Naive thymus-derived CD4-positive, alpha-beta T cell (primary cell): ENCODE measurements at regions of chr1 and their contacts with region 1.

Region 1: GRCh38 chr1:35769759-35770446 is at the start of gene CLSPN:
- DNase-seq: peak; percentile 75 to 95 (median 88)
- ATAC-seq: peak; percentile 97
- H3K4me3 ChIP-seq: peak within 1 kb of the TSS; percentile 87
- H3K4me3 Mint-ChIP-seq: peak within 1 kb of the TSS; percentile 97 to 100 (median 99)
- H3K27ac ChIP-seq: peak within 1 kb of the TSS; percentile 88
- H3K27ac Mint-ChIP-seq: peak within 1 kb of the TSS; percentile 73 to 96 (median 94)
- H3K4me1 ChIP-seq: no peaks in the 10 kb centered on the region
- H3K4me1 Mint-ChIP-seq: peaks cover 0 to 29% (median 11%) of the 10 kb centered on the region in 7 donors
- H3K27me3 ChIP-seq: no peaks in the 10 kb centered on the region
- H3K27me3 Mint-ChIP-seq: no peaks in the 10 kb centered on the region
- total RNA-seq, gene CLSPN: 0.11 to 48.7 (median 0.64) TPM

Region 2: GRCh38 chr1:35202048-35202719 is 567.7 kb before region 1 on chr1:
- CTCF ChIA-PET with region 1: no interaction called
- POLR2A ChIA-PET with region 1: no interaction called
- intact Hi-C with region 1: loop called (anchors 1 to 2 kb)
- DNase-seq: peak; percentile 23 to 80 (median 72)
- ATAC-seq: peak; percentile 100
- H3K4me3 ChIP-seq: no peak overlapping the region
- H3K4me3 Mint-ChIP-seq: peak overlapping the region in 1 of 10 donors; percentile 25
- H3K27ac ChIP-seq: no peak overlapping the region
- H3K27ac Mint-ChIP-seq: peak overlapping the region in 3 of 9 donors; percentile 46 to 79 (median 51)
- H3K4me1 ChIP-seq: peaks cover 0 to 8% of the 10 kb centered on the region in 2 donors
- H3K4me1 Mint-ChIP-seq: peaks cover 3 to 13% (median 9%) of the 10 kb centered on the region in 7 donors
- H3K27me3 ChIP-seq: peaks cover 0 to 4% of the 10 kb centered on the region in 2 donors
- H3K27me3 Mint-ChIP-seq: peaks cover 0 to 32% (median 0%) of the 10 kb centered on the region in 5 donors

Region 3: GRCh38 chr1:35505908-35506798 is 263.8 kb before region 1 on chr1:
- CTCF ChIA-PET with region 1: no interaction called
- POLR2A ChIA-PET with region 1: no interaction called
- intact Hi-C with region 1: loop called in 1 of 2 experiments (anchors 1 kb)
- DNase-seq: peak in 8 of 9 donors; percentile 29 to 73 (median 56)
- ATAC-seq: peak; percentile 84
- H3K4me3 ChIP-seq: peak overlapping the region; percentile 16
- H3K4me3 Mint-ChIP-seq: peak overlapping the region; percentile 75 to 84 (median 78)
- H3K27ac ChIP-seq: peak overlapping the region; percentile 60
- H3K27ac Mint-ChIP-seq: peak overlapping the region; percentile 73 to 97 (median 93)
- H3K4me1 ChIP-seq: peaks cover 32 to 45% of the 10 kb centered on the region in 2 donors
- H3K4me1 Mint-ChIP-seq: peaks cover 44 to 85% (median 82%) of the 10 kb centered on the region in 7 donors
- H3K27me3 ChIP-seq: no peaks in the 10 kb centered on the region
- H3K27me3 Mint-ChIP-seq: no peaks in the 10 kb centered on the region

Region 4: GRCh38 chr1:35641233-35641866 is 128.6 kb before region 1 on chr1 and contains the start of gene PSMB2:
- CTCF ChIA-PET with region 1: no interaction called
- POLR2A ChIA-PET with region 1: interaction called, 3 read pairs
- intact Hi-C with region 1: loop called (anchors 1 kb)
- DNase-seq: peak; percentile 89 to 96 (median 95)
- ATAC-seq: peak; percentile 97
- H3K4me3 ChIP-seq: peak within 1 kb of the TSS; percentile 89
- H3K4me3 Mint-ChIP-seq: peak within 1 kb of the TSS; percentile 97 to 100 (median 100)
- H3K27ac ChIP-seq: peak within 1 kb of the TSS; percentile 92
- H3K27ac Mint-ChIP-seq: peak within 1 kb of the TSS; percentile 98 to 100 (median 99)
- H3K4me1 ChIP-seq: peaks cover 18 to 19% of the 10 kb centered on the region in 2 donors
- H3K4me1 Mint-ChIP-seq: peaks cover 16 to 54% (median 42%) of the 10 kb centered on the region in 7 donors
- H3K27me3 ChIP-seq: no peaks in the 10 kb centered on the region
- H3K27me3 Mint-ChIP-seq: peaks cover 12 to 44% (median 30%) of the 10 kb centered on the region in 5 donors
- total RNA-seq, gene PSMB2: 20.4 to 93.5 (median 23.5) TPM

Region 5: DNA sequence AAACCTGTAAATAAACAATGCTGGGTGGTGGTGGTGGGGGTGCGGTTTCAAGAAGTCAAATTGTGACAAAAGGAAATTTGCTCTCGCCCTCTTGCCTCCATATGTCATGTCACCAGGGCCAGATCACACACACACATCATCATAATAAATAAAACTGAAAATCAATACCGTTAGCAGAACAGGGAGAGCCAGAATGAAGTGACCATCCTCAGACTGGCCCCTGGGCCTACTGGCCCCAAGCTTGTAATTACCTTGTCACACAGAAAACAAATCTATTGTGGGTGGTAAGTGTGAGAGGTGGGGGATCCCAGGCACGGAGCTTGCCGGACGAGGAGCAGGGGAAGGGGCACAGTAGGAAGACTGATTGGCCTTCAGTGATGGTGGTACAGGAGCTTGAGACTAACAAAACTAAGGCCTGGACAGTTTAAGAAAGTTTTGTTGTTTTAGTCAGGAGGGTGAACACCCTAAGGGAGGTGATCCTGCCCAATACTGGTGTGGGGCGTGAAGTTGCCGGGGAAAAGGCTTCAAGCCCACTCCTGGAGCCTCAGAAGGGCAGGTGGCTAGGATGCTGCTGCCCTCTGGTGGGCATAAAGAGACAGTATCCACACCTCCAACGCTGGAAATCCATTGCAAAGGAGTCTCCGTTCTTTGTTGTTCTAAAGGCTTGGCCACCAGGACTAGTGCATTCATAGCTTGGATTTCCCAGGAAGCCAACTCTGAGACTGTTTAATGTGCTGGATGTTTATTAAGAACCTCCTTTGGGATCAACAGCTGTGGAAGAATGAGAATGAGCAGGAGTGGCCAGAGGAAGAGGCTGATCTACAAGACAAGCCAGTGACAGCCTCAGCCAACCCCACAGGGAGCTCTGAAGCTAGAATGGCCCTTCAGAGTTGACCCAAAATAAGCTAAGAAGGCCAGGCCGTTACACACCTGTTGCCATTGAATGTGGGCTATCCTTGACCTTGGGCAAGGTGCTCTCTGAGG is 43.2 kb before region 1 on chr1:
- CTCF ChIA-PET with region 1: interaction called, 17 read pairs
- POLR2A ChIA-PET with region 1: no interaction called
- intact Hi-C with region 1: loop called (anchors 1 to 2 kb)
- DNase-seq: peak in 8 of 9 donors; percentile 16 to 59 (median 45)
- ATAC-seq: peak; percentile 90
- H3K4me3 ChIP-seq: no peak overlapping the region
- H3K4me3 Mint-ChIP-seq: no peak overlapping the region
- H3K27ac ChIP-seq: no peak overlapping the region
- H3K27ac Mint-ChIP-seq: no peak overlapping the region
- H3K4me1 ChIP-seq: no peaks in the 10 kb centered on the region
- H3K4me1 Mint-ChIP-seq: peaks cover 0 to 5% (median 0%) of the 10 kb centered on the region in 7 donors
- H3K27me3 ChIP-seq: no peaks in the 10 kb centered on the region
- H3K27me3 Mint-ChIP-seq: no peaks in the 10 kb centered on the region

Region 6: GRCh38 chr1:35882945-35883634 is 113.2 kb after region 1 on chr1 and contains the start of gene AGO1:
- CTCF ChIA-PET with region 1: no interaction called
- POLR2A ChIA-PET with region 1: no interaction called
- intact Hi-C with region 1: loop called (anchors 2 to 10 kb)
- DNase-seq: peak; percentile 94 to 99 (median 97)
- ATAC-seq: peak; percentile 100
- H3K4me3 ChIP-seq: peak within 1 kb of the TSS; percentile 100
- H3K4me3 Mint-ChIP-seq: peak within 1 kb of the TSS; percentile 90 to 98 (median 94)
- H3K27ac ChIP-seq: peak within 1 kb of the TSS; percentile 79
- H3K27ac Mint-ChIP-seq: peak within 1 kb of the TSS; percentile 72 to 92 (median 84)
- H3K4me1 ChIP-seq: peaks cover 9 to 24% of the 10 kb centered on the region in 2 donors
- H3K4me1 Mint-ChIP-seq: peaks cover 37 to 55% (median 51%) of the 10 kb centered on the region in 7 donors
- H3K27me3 ChIP-seq: no peaks in the 10 kb centered on the region
- H3K27me3 Mint-ChIP-seq: peaks cover 0 to 4% (median 0%) of the 10 kb centered on the region in 5 donors
- total RNA-seq, gene AGO1: 22.5 to 28.0 (median 26.9) TPM

Region 7: DNA sequence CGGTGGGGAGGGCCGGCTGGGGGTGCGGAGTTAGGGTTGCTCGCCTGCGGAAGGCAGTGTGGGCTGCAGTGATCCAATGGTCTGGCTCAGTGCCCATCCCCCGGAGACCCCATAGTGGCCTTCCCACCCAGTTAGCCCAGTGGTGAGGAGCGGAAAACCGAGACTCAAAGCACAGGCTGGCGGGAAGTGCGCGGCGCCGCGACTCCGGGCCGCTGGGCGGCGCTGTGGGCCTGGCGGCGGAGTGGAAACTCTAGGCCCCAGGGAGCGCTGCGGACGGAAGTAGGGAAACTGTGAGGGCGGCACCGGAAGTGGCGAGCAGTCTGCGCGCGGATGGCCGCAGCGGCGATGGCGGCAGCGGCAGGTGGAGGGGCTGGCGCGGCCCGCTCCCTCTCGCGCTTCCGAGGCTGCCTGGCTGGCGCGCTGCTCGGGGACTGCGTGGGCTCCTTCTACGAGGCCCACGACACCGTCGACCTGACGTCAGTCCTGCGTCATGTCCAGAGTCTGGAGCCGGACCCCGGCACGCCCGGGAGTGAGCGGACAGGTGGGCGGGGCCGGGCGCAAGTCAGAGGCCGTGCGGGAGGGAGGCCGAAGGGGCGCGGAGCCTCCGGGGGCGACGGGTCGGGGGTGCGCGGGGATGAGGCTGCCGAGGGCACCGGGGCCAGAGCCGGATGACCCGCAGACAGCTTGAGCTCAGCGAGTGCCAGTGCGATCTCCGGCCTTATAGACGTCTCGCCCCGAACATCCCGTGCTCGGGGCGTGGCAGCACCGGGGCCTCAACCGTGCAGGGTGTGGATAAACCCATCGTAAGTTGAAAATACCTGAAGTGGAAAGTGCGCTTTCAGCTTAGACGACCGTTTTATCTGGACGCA is 318.9 kb after region 1 on chr1 and contains the start of gene ADPRS:
- CTCF ChIA-PET with region 1: no interaction called
- POLR2A ChIA-PET with region 1: no interaction called
- intact Hi-C with region 1: no loop called
- DNase-seq: peak; percentile 81 to 95 (median 88)
- ATAC-seq: peak; percentile 98
- H3K4me3 ChIP-seq: peak within 1 kb of the TSS; percentile 47
- H3K4me3 Mint-ChIP-seq: peak within 1 kb of the TSS; percentile 83 to 96 (median 93)
- H3K27ac ChIP-seq: peak within 1 kb of the TSS; percentile 98
- H3K27ac Mint-ChIP-seq: peak within 1 kb of the TSS; percentile 86 to 97 (median 90)
- H3K4me1 ChIP-seq: peaks cover 11 to 16% of the 10 kb centered on the region in 2 donors
- H3K4me1 Mint-ChIP-seq: peaks cover 12 to 30% (median 23%) of the 10 kb centered on the region in 7 donors
- H3K27me3 ChIP-seq: peaks cover 0 to 5% of the 10 kb centered on the region in 2 donors
- H3K27me3 Mint-ChIP-seq: peaks cover 10 to 18% (median 10%) of the 10 kb centered on the region in 5 donors
- total RNA-seq, gene ADPRS: 18.0 to 30.2 (median 24.2) TPM